Calu3 (cell line): ENCODE measurements at regions of chr12 and their contacts with region 1.

Region 1: GRCh38 chr12:11688831-11689230 is 39.4 kb downstream of the ETV6 start:
- DNase-seq: no peak
- H3K4me3 Mint-ChIP-seq: no peak overlapping the region
- H3K27ac Mint-ChIP-seq: no peak overlapping the region
- H3K4me1 Mint-ChIP-seq: peaks cover 12% of the 10 kb centered on the region
- H3K27me3 Mint-ChIP-seq: no peaks in the 10 kb centered on the region
- CTCF ChIP-seq: no peak

Region 2: GRCh38 chr12:11545484-11546330 is 143.1 kb before region 1 on chr12:
- CTCF ChIA-PET with region 1: interaction called, 11 read pairs
- intact Hi-C with region 1: no loop called
- DNase-seq: no peak
- H3K4me3 Mint-ChIP-seq: no peak overlapping the region
- H3K27ac Mint-ChIP-seq: no peak overlapping the region
- H3K4me1 Mint-ChIP-seq: peaks cover 8% of the 10 kb centered on the region
- H3K27me3 Mint-ChIP-seq: no peaks in the 10 kb centered on the region
- CTCF ChIP-seq: no peak